ENCODE measurements at regions of chr20 and their contacts with region 1.

Region 1: GRCh38 chr20:58481481-58482021 is 33.6 kb downstream of the APCDD1L start:
- DNase-seq: peak; percentile 68
- ATAC-seq: peak; percentile 94
- H3K4me3 Mint-ChIP-seq: no peak overlapping the region
- H3K27ac Mint-ChIP-seq: no peak overlapping the region
- H3K4me1 Mint-ChIP-seq: no peaks in the 10 kb centered on the region
- H3K27me3 Mint-ChIP-seq: peaks cover 8% of the 10 kb centered on the region
- CTCF ChIP-seq: peak; percentile 86

Region 2: GRCh38 chr20:58839474-58839874 is 357.9 kb after region 1 on chr20:
- CTCF ChIA-PET with region 1: interaction called, 25 read pairs
- POLR2A ChIA-PET with region 1: no interaction called
- intact Hi-C with region 1: loop called (anchors 10 kb)
- DNase-seq: peak; percentile 68
- ATAC-seq: peak; percentile 72
- H3K4me3 Mint-ChIP-seq: peak overlapping the region; percentile 46
- H3K27ac Mint-ChIP-seq: no peak overlapping the region
- H3K4me1 Mint-ChIP-seq: peaks cover 25% of the 10 kb centered on the region
- H3K27me3 Mint-ChIP-seq: peaks cover 41% of the 10 kb centered on the region
- CTCF ChIP-seq: peak; percentile 55